Activated naive CD4-positive, alpha-beta T cell treated with anti-CD3 and anti-CD28 coated beads for 36 hours (primary cell): ENCODE measurements at regions of chr1 and their contacts with region 1.

Region 1: GRCh38 chr1:234610348-234611152 is 572 bp upstream of the IRF2BP2 start:
- DNase-seq: peak; percentile 91
- H3K4me3 Mint-ChIP-seq: peak overlapping the region; percentile 84
- H3K27ac Mint-ChIP-seq: peak overlapping the region; percentile 96
- H3K4me1 Mint-ChIP-seq: peaks cover 33% of the 10 kb centered on the region
- H3K27me3 Mint-ChIP-seq: no peaks in the 10 kb centered on the region

Region 2: GRCh38 chr1:234499119-234499942 is 111.2 kb before region 1 on chr1:
- CTCF ChIA-PET with region 1: interaction called, 6 read pairs
- intact Hi-C with region 1: loop called (anchors 1 kb)
- DNase-seq: peak; percentile 92
- H3K4me3 Mint-ChIP-seq: no peak overlapping the region
- H3K27ac Mint-ChIP-seq: peak overlapping the region; percentile 82
- H3K4me1 Mint-ChIP-seq: peaks cover 64% of the 10 kb centered on the region
- H3K27me3 Mint-ChIP-seq: no peaks in the 10 kb centered on the region

Region 3: GRCh38 chr1:234645474-234645953 is 35.0 kb after region 1 on chr1:
- CTCF ChIA-PET with region 1: no interaction called
- intact Hi-C with region 1: no loop called
- DNase-seq: no peak
- H3K4me3 Mint-ChIP-seq: no peak overlapping the region
- H3K27ac Mint-ChIP-seq: no peak overlapping the region
- H3K4me1 Mint-ChIP-seq: no peaks in the 10 kb centered on the region
- H3K27me3 Mint-ChIP-seq: no peaks in the 10 kb centered on the region

Region 4: GRCh38 chr1:234656856-234657654 is 46.5 kb after region 1 on chr1:
- CTCF ChIA-PET with region 1: interaction called, 3 read pairs
- intact Hi-C with region 1: loop called (anchors 1 kb)
- DNase-seq: peak; percentile 55
- H3K4me3 Mint-ChIP-seq: no peak overlapping the region
- H3K27ac Mint-ChIP-seq: no peak overlapping the region
- H3K4me1 Mint-ChIP-seq: peaks cover 13% of the 10 kb centered on the region
- H3K27me3 Mint-ChIP-seq: no peaks in the 10 kb centered on the region

Region 5: GRCh38 chr1:234772345-234773147 is 162.0 kb after region 1 on chr1:
- CTCF ChIA-PET with region 1: interaction called, 4 read pairs
- intact Hi-C with region 1: loop called (anchors 1 kb)
- DNase-seq: peak; percentile 97
- H3K4me3 Mint-ChIP-seq: peak overlapping the region; percentile 61
- H3K27ac Mint-ChIP-seq: peak overlapping the region; percentile 92
- H3K4me1 Mint-ChIP-seq: peaks cover 59% of the 10 kb centered on the region
- H3K27me3 Mint-ChIP-seq: no peaks in the 10 kb centered on the region

Region 6: GRCh38 chr1:234963180-234963903 is 352.8 kb after region 1 on chr1:
- CTCF ChIA-PET with region 1: interaction called, 3 read pairs
- intact Hi-C with region 1: loop called (anchors 1 kb)
- DNase-seq: peak; percentile 98
- H3K4me3 Mint-ChIP-seq: peak overlapping the region; percentile 35
- H3K27ac Mint-ChIP-seq: peak overlapping the region; percentile 97
- H3K4me1 Mint-ChIP-seq: peaks cover 72% of the 10 kb centered on the region
- H3K27me3 Mint-ChIP-seq: no peaks in the 10 kb centered on the region

Region 7: DNA sequence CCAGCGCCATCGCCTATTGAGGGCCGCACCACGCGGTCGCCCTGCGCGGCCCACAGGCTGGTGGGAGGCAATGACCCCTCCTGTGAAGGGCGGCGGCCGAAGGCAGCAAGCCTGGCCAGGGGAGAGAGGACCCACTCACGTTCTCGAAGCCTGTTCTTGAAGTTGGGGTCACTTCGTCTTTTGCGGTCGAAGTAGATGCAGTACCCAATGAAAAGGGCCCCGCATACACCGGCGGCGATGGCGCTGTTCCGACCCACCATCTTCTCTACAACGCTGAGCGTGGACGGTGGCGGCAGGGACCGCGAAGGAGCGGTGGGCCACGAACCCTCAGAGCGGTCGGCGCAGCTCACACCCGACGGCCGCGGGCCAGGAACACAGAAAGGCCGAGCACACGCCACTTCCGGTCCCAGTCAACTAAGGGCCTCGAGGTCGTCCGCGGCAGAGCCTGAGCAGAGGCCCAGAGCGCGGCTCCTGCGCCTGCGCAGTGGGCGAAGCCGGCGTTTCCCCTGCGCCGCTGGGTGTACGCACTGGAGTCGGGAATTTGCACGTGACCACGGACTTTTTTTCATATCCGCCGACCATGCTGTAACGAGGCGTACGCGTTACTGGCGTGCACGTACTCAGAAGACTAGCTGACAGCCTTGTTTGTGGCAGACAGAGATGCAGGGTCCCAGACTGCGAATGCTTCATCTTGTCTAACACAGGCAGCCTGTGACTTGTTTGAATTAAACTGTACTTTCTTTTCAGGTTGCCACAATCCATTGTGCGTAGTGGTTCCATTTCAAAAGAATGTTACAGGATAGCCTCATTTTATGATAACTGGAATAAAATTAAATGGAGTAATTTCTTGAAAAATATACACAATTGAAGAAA is 518.1 kb after region 1 on chr1 and contains the start of gene TOMM20:
- CTCF ChIA-PET with region 1: no interaction called
- intact Hi-C with region 1: loop called (anchors 1 kb)
- DNase-seq: peak; percentile 98
- H3K4me3 Mint-ChIP-seq: peak within 1 kb of the TSS; percentile 96
- H3K27ac Mint-ChIP-seq: peak within 1 kb of the TSS; percentile 94
- H3K4me1 Mint-ChIP-seq: peaks cover 38% of the 10 kb centered on the region
- H3K27me3 Mint-ChIP-seq: no peaks in the 10 kb centered on the region
- total RNA-seq, gene TOMM20: 155 to 192 TPM